ENCODE measurements at regions of chr6 and their contacts with region 1.

Region 1: DNA sequence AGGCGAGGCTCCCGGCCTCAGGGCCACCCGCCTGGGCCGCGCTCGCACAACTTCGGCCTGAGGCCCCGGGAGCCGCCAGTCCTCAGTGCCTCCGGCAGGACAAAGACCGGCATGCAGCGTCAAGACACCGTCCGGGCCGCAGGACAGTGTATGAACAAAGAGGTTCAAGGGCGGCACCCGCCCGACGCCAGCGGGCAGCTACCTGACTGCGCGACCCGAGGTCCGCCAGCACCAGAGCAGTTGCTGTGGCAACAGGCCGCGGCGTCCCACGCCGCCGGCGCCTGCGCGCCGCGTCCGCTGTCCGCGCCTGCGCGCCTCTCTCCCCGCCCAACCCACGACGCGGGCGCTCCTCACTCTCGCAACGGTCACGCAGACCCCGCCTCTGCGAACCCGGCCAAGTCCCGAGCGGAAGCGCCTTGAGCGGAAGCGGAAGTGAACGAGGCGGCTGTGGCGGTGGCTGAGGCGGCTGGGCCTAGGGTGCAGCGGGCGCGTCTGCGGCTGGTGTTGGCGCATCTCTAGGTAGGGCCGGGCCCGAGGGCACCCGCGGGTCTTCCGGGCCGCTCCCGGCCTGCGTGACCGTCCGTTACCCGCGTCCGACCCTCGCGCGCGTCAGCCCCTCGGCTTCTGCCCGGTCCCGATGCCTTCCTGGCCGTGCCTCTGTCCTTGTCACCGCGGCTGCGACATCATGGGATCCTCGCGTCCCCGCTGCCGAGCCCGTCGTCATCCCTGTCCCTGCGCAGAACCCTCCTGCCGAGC is at the start of gene FAM120B:
- DNase-seq: peak; percentile 95 to 99 (median 97)
- H3K4me3 ChIP-seq: peak within 1 kb of the TSS; percentile 69 to 100 (median 95)
- H3K27ac ChIP-seq: peak within 1 kb of the TSS in 58 of 59 donors; percentile 21 to 94 (median 82)
- H3K27me3 ChIP-seq: no peaks in the 10 kb centered on the region
- CTCF ChIP-seq: peak in 23 of 56 donors; percentile 7 to 57 (median 26)
- total RNA-seq, gene FAM120B: 37.3 to 72.0 (median 55.7) TPM

Region 2: GRCh38 chr6:170371588-170371987 is 65.1 kb after region 1 on chr6:
- intact Hi-C with region 1: loop called in 1 of 2 experiments (anchors 5 kb)
- DNase-seq: peak in 9 of 10 donors; percentile 45 to 78 (median 66)
- H3K4me3 ChIP-seq: peak overlapping the region in 7 of 59 donors; percentile 2 to 22 (median 8)
- H3K27ac ChIP-seq: peak overlapping the region in 45 of 59 donors; percentile 7 to 82 (median 60)
- H3K27me3 ChIP-seq: no peaks in the 10 kb centered on the region
- CTCF ChIP-seq: peak in 31 of 56 donors; percentile 9 to 58 (median 31)

Region 3: GRCh38 chr6:170403451-170403850 is 96.9 kb after region 1 on chr6:
- intact Hi-C with region 1: loop called in 1 of 2 experiments (anchors 5 kb)
- DNase-seq: no peak
- H3K4me3 ChIP-seq: peak overlapping the region in 4 of 59 donors; percentile 2 to 37 (median 8)
- H3K27ac ChIP-seq: peak overlapping the region in 50 of 59 donors; percentile 3 to 88 (median 72)
- H3K27me3 ChIP-seq: no peaks in the 10 kb centered on the region
- CTCF ChIP-seq: no peak

Measured in dorsolateral prefrontal cortex (tissue), 120 donors.